ENCODE measurements at regions of chrX and their contacts with region 1.

Region 1: GRCh38 chrX:115344885-115345614 is 55.5 kb downstream of the LUZP4 start:
- DNase-seq: peak; percentile 94
- H3K4me3 ChIP-seq: no peak overlapping the region
- H3K27ac ChIP-seq: peak overlapping the region; percentile 61
- H3K4me1 ChIP-seq: peaks cover 11% of the 10 kb centered on the region
- H3K27me3 ChIP-seq: no peaks in the 10 kb centered on the region
- CTCF ChIP-seq: no peak
- POLR2A ChIP-seq: no peak

Region 2: GRCh38 chrX:115372152-115372551 is 27.1 kb after region 1 on chrX:
- CTCF ChIA-PET with region 1: interaction called, 7 read pairs
- POLR2A ChIA-PET with region 1: no interaction called
- dilution Hi-C with region 1: no loop called
- intact Hi-C with region 1: loop called (anchors 2 kb)
- DNase-seq: peak; percentile 68
- H3K4me3 ChIP-seq: no peak overlapping the region
- H3K27ac ChIP-seq: peak overlapping the region; percentile 78
- H3K4me1 ChIP-seq: peaks cover 27% of the 10 kb centered on the region
- H3K27me3 ChIP-seq: no peaks in the 10 kb centered on the region
- CTCF ChIP-seq: no peak
- POLR2A ChIP-seq: no peak

Region 3: DNA sequence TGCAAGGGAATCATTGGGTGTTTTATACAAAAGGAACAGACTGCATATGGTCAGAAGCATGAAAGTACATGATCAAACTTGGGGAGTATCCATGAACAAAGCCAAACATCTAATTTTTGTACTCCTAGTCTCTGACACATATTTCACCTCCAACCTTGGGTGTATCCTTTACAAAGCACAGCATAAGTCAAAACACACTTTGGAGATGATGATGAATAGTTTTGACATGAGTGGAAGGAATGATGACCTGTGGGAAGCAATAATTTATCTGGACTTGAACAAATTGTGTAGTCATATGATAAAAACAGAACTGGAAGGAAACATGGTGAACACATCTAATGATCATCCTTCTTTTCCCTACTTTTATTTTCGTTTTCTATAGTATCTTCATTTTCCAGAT is 107.2 kb after region 1 on chrX:
- CTCF ChIA-PET with region 1: no interaction called
- POLR2A ChIA-PET with region 1: no interaction called
- dilution Hi-C with region 1: no loop called
- intact Hi-C with region 1: loop called (anchors 1 kb)
- DNase-seq: peak; percentile 35
- H3K4me3 ChIP-seq: no peak overlapping the region
- H3K27ac ChIP-seq: no peak overlapping the region
- H3K4me1 ChIP-seq: peaks cover 5% of the 10 kb centered on the region
- H3K27me3 ChIP-seq: no peaks in the 10 kb centered on the region
- CTCF ChIP-seq: no peak
- POLR2A ChIP-seq: no peak

Region 4: GRCh38 chrX:115592997-115593734 is 248.1 kb after region 1 on chrX:
- CTCF ChIA-PET with region 1: interaction called, 3 read pairs
- POLR2A ChIA-PET with region 1: no interaction called
- dilution Hi-C with region 1: no loop called
- intact Hi-C with region 1: loop called (anchors 1 kb)
- DNase-seq: peak; percentile 71
- H3K4me3 ChIP-seq: peak overlapping the region; percentile 7 to 99 (median 84)
- H3K27ac ChIP-seq: peak overlapping the region; percentile 93
- H3K4me1 ChIP-seq: peaks cover 30% of the 10 kb centered on the region
- H3K27me3 ChIP-seq: no peaks in the 10 kb centered on the region
- CTCF ChIP-seq: no peak
- POLR2A ChIP-seq: peak; percentile 75

Measured in endothelial cell of umbilical vein (primary cell).